Caco-2 (cell line): ENCODE measurements at regions of chrX and their contacts with region 1.

Region 1: DNA sequence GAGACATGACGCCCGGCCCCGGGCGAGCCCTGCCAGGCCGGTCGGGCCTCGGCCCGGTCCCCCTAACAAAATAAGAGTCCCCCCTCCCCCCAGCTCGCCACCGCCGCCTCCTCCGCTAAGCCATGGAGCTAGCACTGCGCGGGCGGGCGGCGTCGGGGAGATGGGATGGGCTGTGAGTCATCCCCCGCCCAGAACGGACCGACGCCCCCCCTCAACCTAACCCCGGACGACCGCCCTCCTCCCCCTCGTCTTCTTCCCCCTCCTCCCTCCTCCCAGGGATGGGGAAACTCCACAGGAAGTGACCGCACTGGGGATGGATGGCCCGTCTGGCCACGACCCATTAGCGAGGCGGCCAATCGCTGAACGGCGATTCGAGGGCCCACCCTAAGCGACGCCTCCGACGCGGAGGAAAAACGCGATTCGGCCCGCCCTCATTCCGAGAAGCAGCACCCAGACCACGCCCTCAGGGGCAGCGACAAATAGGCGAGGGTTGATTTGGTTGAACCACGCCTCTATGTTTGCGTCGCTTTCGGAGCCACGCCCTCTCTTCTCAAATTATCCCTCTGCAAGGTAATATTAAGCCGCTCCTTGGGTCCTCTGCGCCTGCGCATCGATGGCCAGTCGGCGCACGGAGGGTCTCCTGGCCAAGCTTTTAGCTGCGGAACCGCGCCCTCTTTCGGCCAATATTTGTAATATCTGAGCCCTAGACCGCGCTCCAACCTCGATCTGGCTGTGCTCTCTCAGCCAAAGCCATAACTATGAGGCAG is at the start of gene TFE3:
- DNase-seq: peak; percentile 96 to 98
- H3K4me3 ChIP-seq: peak within 1 kb of the TSS; percentile 79
- H3K4me3 Mint-ChIP-seq: peak within 1 kb of the TSS; percentile 88
- H3K27ac Mint-ChIP-seq: peak within 1 kb of the TSS; percentile 95
- H3K4me1 ChIP-seq: peaks cover 16% of the 10 kb centered on the region
- H3K4me1 Mint-ChIP-seq: peaks cover 7% of the 10 kb centered on the region
- H3K27me3 ChIP-seq: no peaks in the 10 kb centered on the region
- H3K27me3 Mint-ChIP-seq: no peaks in the 10 kb centered on the region
- CTCF ChIP-seq: peak; percentile 41 to 48
- total RNA-seq, gene TFE3: 28.1 and 32.0 TPM in 2 replicates

Region 2: DNA sequence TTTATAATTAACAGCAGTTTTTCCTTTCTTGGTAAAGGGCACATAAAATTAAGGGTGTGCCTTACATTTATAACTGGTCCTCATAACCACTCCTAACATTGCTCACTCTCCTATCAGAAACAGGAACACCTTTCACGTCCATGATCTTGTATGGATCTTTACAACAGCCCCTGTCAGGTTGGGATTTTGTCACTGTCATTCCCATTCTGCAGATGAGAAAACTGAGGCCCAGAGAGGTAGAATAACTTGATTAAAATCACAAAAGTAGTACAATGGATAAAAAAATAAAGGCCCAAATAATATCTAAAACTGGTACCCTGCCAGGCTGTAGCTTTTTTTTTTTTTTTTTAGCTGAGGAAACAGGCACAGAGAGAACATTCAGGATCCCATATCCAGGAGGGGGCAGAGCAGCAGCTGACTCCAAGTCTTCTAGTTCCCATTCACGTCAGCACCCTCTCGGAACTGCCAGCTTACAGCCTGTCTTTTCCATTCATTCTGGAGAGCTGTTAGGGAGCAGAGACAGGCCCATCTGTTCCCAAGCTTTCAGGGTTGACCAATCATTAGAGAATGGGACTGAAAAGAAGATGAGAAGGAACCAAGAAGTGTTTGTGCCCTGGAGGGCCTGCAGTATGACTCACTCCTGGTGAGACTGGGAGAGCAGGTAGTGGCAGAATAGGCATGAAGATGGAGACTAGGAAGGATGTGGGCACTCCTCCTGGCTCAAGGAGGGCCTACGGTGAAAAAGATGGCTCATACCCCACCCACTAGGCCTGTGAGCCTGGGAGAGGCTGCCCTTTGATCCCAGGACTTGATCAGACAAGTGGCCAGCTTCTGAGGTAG is 339.5 kb before region 1 on chrX:
- CTCF ChIA-PET with region 1: no interaction called
- POLR2A ChIA-PET with region 1: no interaction called
- intact Hi-C with region 1: no loop called
- DNase-seq: peak in 1 of 2 experiments; percentile 14
- H3K4me3 ChIP-seq: no peak overlapping the region
- H3K4me3 Mint-ChIP-seq: no peak overlapping the region
- H3K27ac Mint-ChIP-seq: no peak overlapping the region
- H3K4me1 ChIP-seq: 0 out of 2 replicates have a peak, but pooled peaks cover 4% of the 10 kb centered on the region
- H3K4me1 Mint-ChIP-seq: peaks cover 7% of the 10 kb centered on the region
- H3K27me3 ChIP-seq: no peaks in the 10 kb centered on the region
- H3K27me3 Mint-ChIP-seq: no peaks in the 10 kb centered on the region
- CTCF ChIP-seq: no peak

Region 3: DNA sequence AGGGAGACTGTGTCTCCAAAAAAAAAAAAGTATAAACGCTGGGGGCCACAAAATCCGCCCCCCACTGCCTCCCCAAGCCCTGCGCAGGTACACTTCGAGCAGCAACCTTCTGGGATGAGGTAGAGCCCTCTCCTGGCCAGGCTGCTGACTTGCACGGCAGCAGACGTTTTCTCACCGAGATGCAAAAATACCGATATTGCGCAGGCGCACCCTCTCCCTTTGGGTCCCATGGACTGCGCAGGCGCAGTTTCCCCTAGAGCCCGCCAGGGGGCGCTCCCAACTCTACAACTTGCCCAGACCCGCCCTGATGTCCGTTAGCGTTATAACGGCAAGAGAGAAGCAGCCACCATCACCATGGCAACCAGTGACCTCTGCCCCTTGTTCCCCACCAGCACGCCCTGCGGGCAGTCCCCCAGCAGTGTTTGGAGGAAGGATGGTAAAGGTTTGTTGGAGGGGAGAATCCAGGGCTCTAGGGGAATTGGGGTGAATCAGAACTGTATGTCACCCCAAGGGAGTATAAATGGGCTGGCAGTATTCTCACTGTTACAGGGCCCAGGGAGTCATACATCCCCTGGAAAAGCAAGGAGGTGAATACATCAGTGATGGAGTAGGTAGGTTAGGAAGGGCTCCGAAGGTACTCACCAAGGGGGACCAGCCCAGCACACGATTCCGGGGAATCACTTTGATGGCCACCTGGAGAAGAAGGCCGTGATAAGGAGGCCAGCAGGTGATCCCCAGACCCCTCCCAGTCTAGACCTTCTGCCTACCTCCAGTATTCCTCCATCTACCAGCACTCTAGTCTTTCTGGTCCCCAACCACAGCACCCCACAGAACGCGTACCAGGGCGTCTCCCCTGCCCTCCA is 126.0 kb before region 1 on chrX:
- CTCF ChIA-PET with region 1: no interaction called
- POLR2A ChIA-PET with region 1: no interaction called
- intact Hi-C with region 1: loop called (anchors 1 kb)
- DNase-seq: peak; percentile 87 to 88
- H3K4me3 ChIP-seq: peak overlapping the region; percentile 80
- H3K4me3 Mint-ChIP-seq: peak overlapping the region; percentile 91
- H3K27ac Mint-ChIP-seq: peak overlapping the region; percentile 90
- H3K4me1 ChIP-seq: peaks cover 10% of the 10 kb centered on the region; the same call in 1 of the 2 replicates
- H3K4me1 Mint-ChIP-seq: peaks cover 24% of the 10 kb centered on the region
- H3K27me3 ChIP-seq: no peaks in the 10 kb centered on the region
- H3K27me3 Mint-ChIP-seq: no peaks in the 10 kb centered on the region
- CTCF ChIP-seq: peak; percentile 80 to 84

Region 4: GRCh38 chrX:49002091-49002935 is 41.1 kb before region 1 on chrX and contains the start of gene GRIPAP1:
- CTCF ChIA-PET with region 1: interaction called, 3 read pairs
- POLR2A ChIA-PET with region 1: interaction called, 3 read pairs
- intact Hi-C with region 1: loop called (anchors 1 kb)
- DNase-seq: peak; percentile 72 to 78
- H3K4me3 ChIP-seq: peak within 1 kb of the TSS; percentile 50
- H3K4me3 Mint-ChIP-seq: peak within 1 kb of the TSS; percentile 98
- H3K27ac Mint-ChIP-seq: peak within 1 kb of the TSS; percentile 94
- H3K4me1 ChIP-seq: no peaks in the 10 kb centered on the region
- H3K4me1 Mint-ChIP-seq: peaks cover 10% of the 10 kb centered on the region
- H3K27me3 ChIP-seq: no peaks in the 10 kb centered on the region
- H3K27me3 Mint-ChIP-seq: no peaks in the 10 kb centered on the region
- CTCF ChIP-seq: no peak
- total RNA-seq, gene GRIPAP1: 43.1 and 43.6 TPM in 2 replicates

Region 5: DNA sequence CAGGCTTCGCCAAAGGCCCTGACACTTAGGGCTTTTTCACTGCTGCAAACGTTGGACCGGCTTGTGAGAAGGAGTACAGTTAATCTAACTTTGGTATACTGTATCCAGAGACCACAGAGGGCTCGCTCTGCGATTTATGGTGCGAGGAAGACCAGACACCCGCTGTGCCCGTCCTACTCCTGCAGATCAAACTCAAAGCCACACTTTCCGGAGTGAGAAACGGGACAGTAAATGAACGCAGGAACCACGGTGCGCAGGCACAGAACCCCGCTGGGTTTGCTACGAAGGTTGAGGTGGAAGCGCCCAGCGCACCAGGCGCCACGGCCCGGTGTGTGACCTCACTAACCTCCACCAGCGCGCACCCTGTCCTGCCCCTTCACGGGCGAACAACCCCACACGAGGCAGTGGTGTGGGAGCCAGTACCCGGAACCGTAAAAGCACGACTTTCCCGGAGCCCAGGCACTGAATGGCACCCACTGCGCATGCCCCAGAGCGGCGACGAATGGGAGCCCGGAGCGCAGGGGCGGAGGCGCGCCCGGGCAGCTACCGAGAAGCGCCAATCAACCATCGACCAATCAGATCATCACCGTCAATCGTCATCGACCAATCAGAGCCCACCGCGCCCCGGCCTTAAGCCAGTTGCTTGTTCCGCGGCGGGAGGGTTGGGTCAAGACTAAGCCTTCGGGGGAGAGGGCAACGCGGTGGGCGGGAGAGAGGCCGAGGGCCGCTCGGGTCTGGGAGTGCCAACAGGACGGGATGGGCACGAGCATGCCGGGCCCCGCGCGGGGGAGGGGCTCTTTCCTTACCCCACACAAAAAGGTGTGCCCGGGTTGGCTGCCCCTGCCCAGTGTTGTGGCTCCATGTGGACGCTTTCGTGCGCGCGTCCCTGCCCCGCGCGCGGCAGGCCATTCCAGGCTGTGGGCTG is 57.6 kb after region 1 on chrX:
- CTCF ChIA-PET with region 1: interaction called, 6 read pairs
- POLR2A ChIA-PET with region 1: no interaction called
- intact Hi-C with region 1: loop called (anchors 10 kb)
- DNase-seq: peak; percentile 92 to 93
- H3K4me3 ChIP-seq: peak overlapping the region; percentile 72
- H3K4me3 Mint-ChIP-seq: peak overlapping the region; percentile 79
- H3K27ac Mint-ChIP-seq: peak overlapping the region; percentile 66
- H3K4me1 ChIP-seq: no peaks in the 10 kb centered on the region
- H3K4me1 Mint-ChIP-seq: peaks cover 6% of the 10 kb centered on the region
- H3K27me3 ChIP-seq: no peaks in the 10 kb centered on the region
- H3K27me3 Mint-ChIP-seq: no peaks in the 10 kb centered on the region
- CTCF ChIP-seq: no peak

Region 6: GRCh38 chrX:49191033-49191871 is 147.8 kb after region 1 on chrX:
- CTCF ChIA-PET with region 1: no interaction called
- POLR2A ChIA-PET with region 1: interaction called, 14 read pairs
- intact Hi-C with region 1: no loop called
- DNase-seq: peak; percentile 92 to 96
- H3K4me3 ChIP-seq: peak overlapping the region; percentile 52
- H3K4me3 Mint-ChIP-seq: peak overlapping the region; percentile 82
- H3K27ac Mint-ChIP-seq: peak overlapping the region; percentile 80
- H3K4me1 ChIP-seq: peaks cover 4% of the 10 kb centered on the region
- H3K4me1 Mint-ChIP-seq: peaks cover 43% of the 10 kb centered on the region
- H3K27me3 ChIP-seq: no peaks in the 10 kb centered on the region
- H3K27me3 Mint-ChIP-seq: peaks cover 4% of the 10 kb centered on the region
- CTCF ChIP-seq: no peak